ENCODE measurements at regions of chr2 and their contacts with region 1.

Region 1: DNA sequence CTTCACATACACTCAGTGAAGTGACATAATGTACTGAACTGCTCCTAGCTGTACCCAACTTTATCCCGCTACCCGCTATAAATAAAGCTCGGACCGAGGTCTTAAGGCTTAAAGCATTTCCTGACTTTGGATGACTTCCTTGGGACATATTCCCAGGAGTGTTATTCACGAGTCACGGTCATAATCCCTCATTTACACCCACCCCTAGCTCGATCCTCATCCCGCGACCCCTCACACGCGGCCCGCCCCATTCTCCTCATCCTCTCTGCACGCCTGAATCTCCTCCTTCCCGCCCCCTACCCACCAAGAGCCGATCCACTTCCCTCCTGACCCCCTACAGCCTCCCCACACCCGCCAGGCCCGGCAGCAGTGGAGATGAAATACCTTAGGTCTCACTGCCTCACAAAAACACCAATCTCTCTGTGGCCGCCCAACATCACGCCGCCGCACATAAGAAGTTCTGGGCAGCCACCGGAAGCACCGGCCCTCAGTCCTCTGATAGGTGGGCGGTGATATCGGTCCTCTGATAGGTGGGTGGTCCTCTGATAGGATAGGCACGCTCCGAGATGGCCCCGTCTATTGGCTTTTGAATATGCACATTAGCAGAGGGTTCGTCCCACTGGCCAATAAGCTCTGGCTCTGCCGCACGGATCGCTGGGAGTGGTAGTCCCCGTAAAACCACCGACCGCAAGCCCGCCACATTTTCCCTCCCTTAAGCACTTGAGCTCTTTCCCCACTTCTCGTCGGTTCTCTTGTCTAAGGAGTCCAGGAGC is at the start of gene WDCP:
- DNase-seq: peak; percentile 90 to 96 (median 94)
- H3K4me3 ChIP-seq: peak within 1 kb of the TSS; percentile 70
- H3K4me3 Mint-ChIP-seq: peak within 1 kb of the TSS; percentile 87 to 98 (median 93)
- H3K27ac ChIP-seq: peak within 1 kb of the TSS; percentile 36
- H3K27ac Mint-ChIP-seq: peak within 1 kb of the TSS; percentile 31 to 97 (median 93)
- H3K4me1 ChIP-seq: peaks cover 22% of the 10 kb centered on the region
- H3K4me1 Mint-ChIP-seq: peaks cover 28 to 42% (median 40%) of the 10 kb centered on the region in 3 donors
- H3K27me3 ChIP-seq: peaks cover 7% of the 10 kb centered on the region
- H3K27me3 Mint-ChIP-seq: no peaks in the 10 kb centered on the region
- total RNA-seq, gene WDCP: 29.4 to 31.9 TPM

Region 2: DNA sequence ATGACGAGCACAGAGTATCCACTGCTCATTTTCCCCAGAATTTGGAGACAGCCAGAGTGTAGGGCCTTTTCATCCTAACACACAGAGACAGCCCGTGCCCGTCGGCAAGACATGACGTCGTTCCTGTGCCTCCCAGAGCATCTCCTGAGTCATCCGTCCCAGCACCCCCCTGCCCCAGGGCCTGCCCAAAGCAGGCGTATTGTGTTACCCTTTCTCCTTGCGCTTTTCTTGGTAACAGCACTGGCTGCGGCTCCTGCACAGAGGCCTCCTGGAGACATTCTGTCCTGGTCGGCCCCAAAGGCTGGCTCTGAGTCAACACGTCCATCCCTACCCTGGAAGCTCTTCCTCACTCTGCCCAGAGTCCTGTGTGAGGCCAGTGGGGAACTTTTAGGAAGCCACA is 445.0 kb before region 1 on chr2:
- CTCF ChIA-PET with region 1: no interaction called
- POLR2A ChIA-PET with region 1: no interaction called
- DNase-seq: no peak
- H3K4me3 ChIP-seq: no peak overlapping the region
- H3K4me3 Mint-ChIP-seq: no peak overlapping the region
- H3K27ac ChIP-seq: no peak overlapping the region
- H3K27ac Mint-ChIP-seq: no peak overlapping the region
- H3K4me1 ChIP-seq: no peaks in the 10 kb centered on the region
- H3K4me1 Mint-ChIP-seq: no peaks in the 10 kb centered on the region
- H3K27me3 ChIP-seq: no peaks in the 10 kb centered on the region
- H3K27me3 Mint-ChIP-seq: peaks cover 0 to 21% of the 10 kb centered on the region in 2 donors

Region 3: DNA sequence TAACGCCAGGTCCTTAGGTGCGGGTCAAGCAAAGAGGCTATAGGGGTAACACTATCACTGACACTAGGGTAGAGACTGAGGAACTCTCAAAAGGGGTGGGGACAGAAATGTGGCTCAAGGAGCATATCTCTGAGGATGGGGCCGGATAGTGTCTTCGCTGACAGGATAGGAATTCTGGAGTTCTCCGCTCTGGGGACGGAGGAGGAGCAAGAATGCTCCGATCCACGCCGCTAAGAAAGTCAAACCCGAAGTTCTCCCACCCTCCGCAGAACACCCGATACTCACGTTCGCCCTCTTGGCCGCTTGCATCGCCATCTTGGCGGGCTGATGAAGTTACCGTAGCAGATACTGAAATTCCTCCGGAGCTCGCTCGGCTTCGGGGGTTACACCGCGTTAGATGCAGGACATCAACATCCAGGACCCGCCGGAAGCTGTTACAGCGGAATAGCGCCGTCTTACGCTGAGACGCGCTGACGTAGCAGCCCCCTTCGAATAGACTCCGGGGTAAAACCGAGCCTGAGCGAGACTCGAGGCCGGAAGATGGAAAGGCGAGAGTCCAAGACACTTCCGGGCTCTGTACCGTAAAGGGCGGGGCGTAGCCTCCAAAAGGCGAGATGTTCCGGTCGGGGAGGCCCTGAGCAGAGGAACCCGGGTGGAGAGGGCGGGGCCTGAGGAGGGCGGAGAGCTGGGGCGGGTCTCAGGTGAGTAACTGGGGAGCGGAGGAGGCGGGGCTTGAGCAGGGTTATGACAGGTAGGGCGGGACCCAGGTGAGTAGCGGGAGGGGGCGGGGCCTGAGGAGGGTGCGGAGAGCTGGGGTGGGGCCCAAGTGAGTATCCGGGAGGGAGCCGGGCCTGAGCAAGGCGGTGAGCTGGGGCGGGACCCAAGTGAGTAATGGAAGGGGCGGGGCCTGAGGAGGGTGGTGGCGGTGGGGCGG is 29.1 kb after region 1 on chr2 and contains the start of gene SF3B6:
- CTCF ChIA-PET with region 1: interaction called, 5 read pairs
- POLR2A ChIA-PET with region 1: interaction called, 27 read pairs
- DNase-seq: peak; percentile 99 to 100 (median 100)
- H3K4me3 ChIP-seq: peak within 1 kb of the TSS; percentile 98
- H3K4me3 Mint-ChIP-seq: peak within 1 kb of the TSS; percentile 94 to 100 (median 99)
- H3K27ac ChIP-seq: peak within 1 kb of the TSS; percentile 93
- H3K27ac Mint-ChIP-seq: peak within 1 kb of the TSS; percentile 91 to 100 (median 98)
- H3K4me1 ChIP-seq: peaks cover 23% of the 10 kb centered on the region
- H3K4me1 Mint-ChIP-seq: peaks cover 29 to 48% (median 42%) of the 10 kb centered on the region in 3 donors
- H3K27me3 ChIP-seq: no peaks in the 10 kb centered on the region
- H3K27me3 Mint-ChIP-seq: no peaks in the 10 kb centered on the region
- total RNA-seq, gene SF3B6: 141 to 146 TPM

Measured in CD8-positive, alpha-beta memory T cell (primary cell).